K562 (cell line): ENCODE measurements at regions of chr19 and their contacts with region 1.

Region 1: DNA sequence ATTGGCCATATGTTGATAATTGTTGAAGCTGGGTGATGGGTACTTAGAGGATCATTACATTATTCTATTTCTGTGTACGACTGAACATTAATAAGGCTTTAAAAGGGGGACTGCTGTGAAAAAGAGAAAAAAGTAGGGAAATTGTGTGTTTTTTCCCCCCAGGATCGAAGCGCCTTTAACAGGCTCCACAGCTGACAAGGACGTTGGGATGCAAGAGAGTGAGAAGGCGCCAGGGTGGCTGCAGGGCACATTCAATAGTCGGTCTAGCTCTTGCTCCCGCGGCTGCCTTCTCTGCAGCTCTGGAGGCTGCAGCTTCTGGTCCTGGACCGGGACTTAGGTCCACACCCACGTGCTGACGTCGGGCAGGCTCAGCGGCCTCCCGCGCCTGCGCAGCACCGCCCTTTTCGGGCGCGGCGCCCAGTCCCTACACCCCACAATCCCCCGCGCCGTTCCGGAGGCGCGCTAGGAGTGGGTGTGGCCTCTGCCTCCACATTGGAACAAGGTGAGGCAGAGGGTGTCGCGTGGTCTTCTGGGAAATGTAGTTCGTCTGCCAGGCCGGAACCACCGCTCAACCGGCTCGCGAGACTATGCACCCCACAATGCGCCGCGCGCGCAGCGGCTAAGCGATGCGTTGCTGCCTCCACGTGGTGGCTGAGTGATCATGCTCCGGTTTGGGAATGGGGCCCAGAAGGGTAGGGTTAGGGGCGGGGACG is 4.9 kb upstream of the LRFN3 start:
- DNase-seq: peak; percentile 99 to 100 (median 99)
- ATAC-seq: peak; percentile 99
- H3K4me3 ChIP-seq: peak overlapping the region; percentile 13
- H3K27ac ChIP-seq: no peak overlapping the region
- H3K4me1 ChIP-seq: peaks cover 2 to 9% of the 10 kb centered on the region in 2 experiments; a peak in 2 of 5 replicates
- H3K27me3 ChIP-seq: peaks cover 7 to 16% of the 10 kb centered on the region in 2 experiments
- CTCF ChIP-seq: peak; percentile 95 to 98 (median 97)
- EP300 ChIP-seq: peak; percentile 8; the same call in 1 of the 2 replicates
- POLR2A ChIP-seq: peak; percentile 77
- RAD21 ChIP-seq: peak; percentile 100

Region 2: DNA sequence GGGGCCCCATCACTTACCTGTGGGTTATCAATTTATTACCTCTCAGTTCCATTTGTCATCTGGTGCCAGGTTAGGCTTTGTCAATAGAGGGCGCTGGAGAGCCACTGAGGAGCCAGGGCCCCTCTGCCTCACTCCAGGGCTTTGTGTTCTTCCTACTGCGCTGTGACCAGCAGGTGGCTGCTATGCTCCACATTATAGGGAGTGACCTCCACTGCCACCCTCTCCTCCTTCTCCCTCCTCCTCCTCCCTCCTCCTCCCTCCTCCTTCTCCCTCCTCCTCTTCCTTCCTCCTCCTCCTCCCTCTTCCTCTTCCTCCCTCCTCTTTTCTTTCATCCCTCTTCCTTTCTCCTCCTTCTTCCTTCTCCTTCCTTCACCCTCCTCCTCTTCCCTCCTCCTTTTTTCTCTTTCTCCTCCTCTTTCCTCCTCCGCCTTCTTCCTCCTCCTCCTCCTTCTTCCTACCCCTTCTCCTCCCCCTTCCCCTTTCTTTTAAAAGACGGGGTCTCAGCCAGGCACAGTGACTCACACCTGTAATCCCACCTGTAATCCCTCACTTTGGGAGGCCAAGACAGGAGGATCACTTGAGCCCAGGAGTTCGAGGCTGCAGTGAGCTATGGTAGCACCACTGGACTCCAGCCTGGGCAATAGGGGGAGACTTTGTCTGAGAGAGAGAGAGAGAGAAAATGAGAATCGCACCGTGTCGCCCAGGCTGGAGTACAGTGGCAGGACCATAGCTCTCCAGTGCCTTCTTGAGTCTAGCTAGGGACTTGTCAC is 237.3 kb before region 1 on chr19:
- CTCF ChIA-PET with region 1: interaction called, 32 read pairs
- POLR2A ChIA-PET with region 1: no interaction called
- in situ Hi-C with region 1: no loop called
- intact Hi-C with region 1: loop called (anchors 1 kb)
- DNase-seq: peak; percentile 87 to 92 (median 89)
- ATAC-seq: peak; percentile 100
- H3K4me3 ChIP-seq: no peak overlapping the region
- H3K27ac ChIP-seq: no peak overlapping the region
- H3K4me1 ChIP-seq: no peaks in the 10 kb centered on the region; a peak in 1 of 5 replicates
- H3K27me3 ChIP-seq: no peaks in the 10 kb centered on the region
- CTCF ChIP-seq: peak; percentile 98 to 99 (median 99)
- EP300 ChIP-seq: no peak
- POLR2A ChIP-seq: no peak
- RAD21 ChIP-seq: peak; percentile 97 to 99

Region 3: GRCh38 chr19:35716801-35717666 is 214.3 kb before region 1 on chr19:
- CTCF ChIA-PET with region 1: interaction called, 7 read pairs
- POLR2A ChIA-PET with region 1: no interaction called
- in situ Hi-C with region 1: no loop called
- intact Hi-C with region 1: loop called (anchors 1 kb)
- DNase-seq: peak; percentile 93 to 97 (median 94)
- ATAC-seq: peak; percentile 92
- H3K4me3 ChIP-seq: peak overlapping the region; percentile 96
- H3K27ac ChIP-seq: peak overlapping the region; percentile 79
- H3K4me1 ChIP-seq: peaks cover 14 to 64% of the 10 kb centered on the region in 2 experiments
- H3K27me3 ChIP-seq: peaks cover 2 to 24% of the 10 kb centered on the region in 2 experiments; a peak in 4 of 5 replicates
- CTCF ChIP-seq: peak; percentile 88 to 96 (median 95)
- EP300 ChIP-seq: no peak
- POLR2A ChIP-seq: peak; percentile 63
- RAD21 ChIP-seq: peak; percentile 89 to 94

Region 4: DNA sequence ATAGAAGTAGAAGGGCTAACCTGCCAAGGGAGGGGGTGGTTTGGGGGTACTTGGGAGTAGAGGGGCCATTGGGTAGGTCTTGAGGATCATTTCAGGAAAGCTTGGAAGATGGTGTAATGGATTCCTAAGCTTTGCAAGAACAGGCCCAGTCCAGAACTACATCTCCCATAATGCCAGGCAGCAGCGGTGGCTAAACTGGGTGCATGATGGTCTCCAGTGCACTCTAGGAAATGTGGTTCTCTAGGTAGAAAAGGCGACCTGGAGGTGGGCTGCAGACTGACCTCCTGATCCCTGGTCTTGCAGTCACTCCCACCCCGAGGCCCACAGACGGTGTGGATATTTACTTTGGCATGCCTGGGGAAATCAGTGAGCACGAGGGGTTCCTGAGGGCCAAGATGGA is 59.1 kb before region 1 on chr19:
- CTCF ChIA-PET with region 1: no interaction called
- POLR2A ChIA-PET with region 1: no interaction called
- in situ Hi-C with region 1: no loop called
- intact Hi-C with region 1: no loop called
- DNase-seq: no peak
- ATAC-seq: no peak
- H3K4me3 ChIP-seq: no peak overlapping the region
- H3K27ac ChIP-seq: no peak overlapping the region
- H3K4me1 ChIP-seq: peaks cover 20 to 45% of the 10 kb centered on the region in 2 experiments
- H3K27me3 ChIP-seq: peaks cover 4 to 13% of the 10 kb centered on the region in 2 experiments; a peak in 3 of 5 replicates
- CTCF ChIP-seq: no peak
- EP300 ChIP-seq: no peak
- POLR2A ChIP-seq: no peak
- RAD21 ChIP-seq: no peak

Region 5: DNA sequence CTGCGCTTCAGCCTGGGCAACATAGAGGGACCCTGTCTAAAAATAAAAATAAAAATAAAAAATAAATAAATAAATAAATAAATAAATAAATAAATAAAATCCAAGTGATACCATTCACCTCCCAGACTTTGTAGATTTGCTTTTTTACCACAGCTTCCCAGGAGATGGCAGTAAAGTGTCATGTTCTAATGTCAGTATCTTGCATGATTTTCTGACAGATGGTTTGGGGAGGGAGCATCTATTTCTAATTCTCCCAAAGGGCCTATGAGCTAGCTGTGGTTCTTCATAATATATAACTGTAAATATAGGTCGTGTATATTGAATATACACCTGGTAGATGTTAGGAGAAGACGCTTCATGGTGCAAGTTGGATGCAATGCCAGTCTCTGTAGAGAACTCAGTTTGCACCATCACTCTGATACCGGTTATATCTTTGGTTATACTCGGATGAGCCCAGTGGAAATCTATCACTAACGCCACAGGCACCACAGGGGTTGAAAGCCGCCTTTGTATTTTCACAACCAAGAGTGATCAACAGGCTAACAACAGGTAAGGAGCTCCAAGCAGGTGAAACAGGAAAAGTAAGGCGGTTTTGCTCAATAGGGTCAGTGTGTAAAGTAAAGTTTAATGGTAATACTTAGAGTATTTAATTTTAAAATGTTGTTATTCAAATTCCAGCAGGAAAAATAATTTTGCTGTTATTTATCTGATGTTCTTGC is 49.0 kb before region 1 on chr19:
- CTCF ChIA-PET with region 1: interaction called, 42 read pairs
- POLR2A ChIA-PET with region 1: no interaction called
- in situ Hi-C with region 1: loop called (anchors 5 kb)
- intact Hi-C with region 1: loop called (anchors 1 kb)
- DNase-seq: peak; percentile 45 to 68 (median 52)
- ATAC-seq: peak; percentile 44; the same call in 1 of the 3 replicates
- H3K4me3 ChIP-seq: no peak overlapping the region
- H3K27ac ChIP-seq: no peak overlapping the region
- H3K4me1 ChIP-seq: peaks cover 8 to 12% of the 10 kb centered on the region in 2 experiments; a peak in 4 of 5 replicates
- H3K27me3 ChIP-seq: peaks cover 9 to 19% of the 10 kb centered on the region in 2 experiments; a peak in 4 of 5 replicates
- CTCF ChIP-seq: peak; percentile 45 to 79 (median 62); a peak in 5 of 6 replicates
- EP300 ChIP-seq: no peak
- POLR2A ChIP-seq: no peak
- RAD21 ChIP-seq: peak; percentile 91 to 94